T-cell (primary cell): ENCODE measurements at regions of chr7 and their contacts with region 1.

Region 1: GRCh38 chr7:2709553-2710285 is 21.7 kb downstream of the AMZ1 start:
- DNase-seq: peak; percentile 41 to 87 (median 69)
- ATAC-seq: peak; percentile 79 to 88 (median 86)
- H3K4me3 ChIP-seq: peak overlapping the region in 1 of 2 donors; percentile 28
- H3K4me3 Mint-ChIP-seq: peak overlapping the region; percentile 59 to 67 (median 62)
- H3K27ac ChIP-seq: no peak overlapping the region
- H3K27ac Mint-ChIP-seq: peak overlapping the region; percentile 67 to 83
- H3K4me1 ChIP-seq: peaks cover 5 to 48% of the 10 kb centered on the region in 2 experiments
- H3K4me1 Mint-ChIP-seq: peaks cover 26 to 37% (median 33%) of the 10 kb centered on the region in 3 donors
- H3K27me3 ChIP-seq: peaks cover 0 to 56% of the 10 kb centered on the region in 2 experiments
- H3K27me3 Mint-ChIP-seq: peaks cover 0 to 3% of the 10 kb centered on the region in 2 donors

Region 2: DNA sequence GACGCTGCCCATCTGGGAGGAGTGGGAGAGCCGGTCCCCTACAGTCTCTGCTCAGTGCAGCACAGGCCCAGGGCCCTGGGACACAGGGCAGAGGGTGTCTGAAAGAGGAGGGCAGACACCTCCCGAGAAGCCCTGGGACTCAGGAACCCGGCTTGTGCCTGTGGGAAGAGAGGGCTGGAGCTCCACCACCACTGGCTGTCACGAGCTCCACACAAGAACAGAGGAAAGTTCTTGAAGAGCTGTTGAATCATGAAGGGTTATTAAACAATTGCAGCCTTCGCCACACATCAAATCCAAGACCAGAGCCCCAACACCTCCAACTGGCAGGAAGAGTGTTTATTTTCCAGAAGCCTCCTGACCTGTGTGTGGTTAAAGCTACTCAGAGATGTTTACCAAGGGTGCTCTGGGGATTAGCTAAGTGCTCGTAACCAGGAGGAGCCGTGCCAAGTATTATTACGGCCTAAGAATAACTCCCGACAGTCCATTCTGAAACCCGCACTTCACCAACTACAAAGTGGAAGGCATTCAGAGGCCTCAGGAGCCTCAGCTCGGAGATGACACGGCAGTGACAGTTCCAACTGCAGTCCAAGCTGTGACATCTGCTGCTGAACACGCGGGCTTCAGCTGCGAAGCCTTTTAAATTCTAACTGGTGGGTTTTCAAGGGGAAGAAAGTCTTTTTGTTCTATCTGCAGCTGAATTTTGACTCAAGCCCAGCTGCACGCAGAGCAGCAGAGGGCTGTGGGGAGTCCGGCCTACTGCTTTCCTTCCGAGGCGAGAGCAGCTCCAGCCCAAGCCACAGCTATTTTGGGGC is 552.0 kb before region 1 on chr7:
- CTCF ChIA-PET with region 1: no interaction called
- POLR2A ChIA-PET with region 1: no interaction called
- DNase-seq: no peak
- ATAC-seq: no peak
- H3K4me3 ChIP-seq: no peak overlapping the region
- H3K4me3 Mint-ChIP-seq: no peak overlapping the region
- H3K27ac ChIP-seq: no peak overlapping the region
- H3K27ac Mint-ChIP-seq: no peak overlapping the region
- H3K4me1 ChIP-seq: no peaks in the 10 kb centered on the region
- H3K4me1 Mint-ChIP-seq: peaks cover 0 to 1% (median 0%) of the 10 kb centered on the region in 3 donors
- H3K27me3 ChIP-seq: no peaks in the 10 kb centered on the region
- H3K27me3 Mint-ChIP-seq: no peaks in the 10 kb centered on the region

Region 3: GRCh38 chr7:2681929-2682799 is 27.6 kb before region 1 on chr7:
- CTCF ChIA-PET with region 1: interaction called, 8 to 14 read pairs
- POLR2A ChIA-PET with region 1: no interaction called
- DNase-seq: no peak
- ATAC-seq: no peak
- H3K4me3 ChIP-seq: no peak overlapping the region
- H3K4me3 Mint-ChIP-seq: no peak overlapping the region
- H3K27ac ChIP-seq: no peak overlapping the region
- H3K27ac Mint-ChIP-seq: no peak overlapping the region
- H3K4me1 ChIP-seq: no peaks in the 10 kb centered on the region
- H3K4me1 Mint-ChIP-seq: no peaks in the 10 kb centered on the region
- H3K27me3 ChIP-seq: peaks cover 0 to 51% of the 10 kb centered on the region in 2 experiments
- H3K27me3 Mint-ChIP-seq: peaks cover 12 to 20% of the 10 kb centered on the region in 2 donors

Region 4: GRCh38 chr7:2698581-2699288 is 11.0 kb before region 1 on chr7:
- CTCF ChIA-PET with region 1: interaction called, 7 to 29 read pairs
- POLR2A ChIA-PET with region 1: no interaction called
- DNase-seq: peak; percentile 41 to 81 (median 61)
- ATAC-seq: peak; percentile 91 to 93 (median 93)
- H3K4me3 ChIP-seq: peak overlapping the region; percentile 6 to 25
- H3K4me3 Mint-ChIP-seq: peak overlapping the region; percentile 60 to 71 (median 63)
- H3K27ac ChIP-seq: no peak overlapping the region
- H3K27ac Mint-ChIP-seq: peak overlapping the region; percentile 83 to 85
- H3K4me1 ChIP-seq: peaks cover 0 to 30% of the 10 kb centered on the region in 2 experiments
- H3K4me1 Mint-ChIP-seq: peaks cover 24 to 31% (median 27%) of the 10 kb centered on the region in 3 donors
- H3K27me3 ChIP-seq: peaks cover 0 to 4% of the 10 kb centered on the region in 2 experiments
- H3K27me3 Mint-ChIP-seq: no peaks in the 10 kb centered on the region